Activated CD8-positive, alpha-beta memory T cell treated with anti-CD3 and anti-CD28 coated beads, Interleukin-2, amount 10 ng/mL, durations not matched to agents 7 days and 5 days (primary cell): ENCODE measurements at regions of chr1 and their contacts with region 1.

Region 1: GRCh38 chr1:23564529-23565122 is 5.3 kb upstream of the ID3 start:
- DNase-seq: no peak
- ATAC-seq: no peak
- H3K4me3 Mint-ChIP-seq: no peak overlapping the region
- H3K27ac Mint-ChIP-seq: no peak overlapping the region
- H3K4me1 Mint-ChIP-seq: peaks cover 17% of the 10 kb centered on the region
- H3K27me3 Mint-ChIP-seq: peaks cover 80% of the 10 kb centered on the region

Region 2: GRCh38 chr1:23484253-23485001 is 80.2 kb before region 1 on chr1:
- CTCF ChIA-PET with region 1: no interaction called
- DNase-seq: peak; percentile 93
- ATAC-seq: peak; percentile 91
- H3K4me3 Mint-ChIP-seq: peak overlapping the region; percentile 76
- H3K27ac Mint-ChIP-seq: peak overlapping the region; percentile 46
- H3K4me1 Mint-ChIP-seq: peaks cover 15% of the 10 kb centered on the region
- H3K27me3 Mint-ChIP-seq: peaks cover 66% of the 10 kb centered on the region

Region 3: GRCh38 chr1:23577056-23578004 is 12.7 kb after region 1 on chr1:
- CTCF ChIA-PET with region 1: interaction called, 14 read pairs
- DNase-seq: peak; percentile 72
- ATAC-seq: peak; percentile 95
- H3K4me3 Mint-ChIP-seq: peak overlapping the region; percentile 20
- H3K27ac Mint-ChIP-seq: peak overlapping the region; percentile 84
- H3K4me1 Mint-ChIP-seq: peaks cover 27% of the 10 kb centered on the region
- H3K27me3 Mint-ChIP-seq: no peaks in the 10 kb centered on the region